ENCODE measurements at regions of chr12 and their contacts with region 1.

Region 1: GRCh38 chr12:46124848-46125619 is 134.7 kb upstream of the SCAF11 start:
- DNase-seq: peak; percentile 42
- CTCF ChIP-seq: peak; percentile 81

Region 2: GRCh38 chr12:45324391-45324790 is 800.6 kb before region 1 on chr12:
- CTCF ChIA-PET with region 1: no interaction called
- POLR2A ChIA-PET with region 1: no interaction called
- DNase-seq: no peak
- CTCF ChIP-seq: no peak

Region 3: DNA sequence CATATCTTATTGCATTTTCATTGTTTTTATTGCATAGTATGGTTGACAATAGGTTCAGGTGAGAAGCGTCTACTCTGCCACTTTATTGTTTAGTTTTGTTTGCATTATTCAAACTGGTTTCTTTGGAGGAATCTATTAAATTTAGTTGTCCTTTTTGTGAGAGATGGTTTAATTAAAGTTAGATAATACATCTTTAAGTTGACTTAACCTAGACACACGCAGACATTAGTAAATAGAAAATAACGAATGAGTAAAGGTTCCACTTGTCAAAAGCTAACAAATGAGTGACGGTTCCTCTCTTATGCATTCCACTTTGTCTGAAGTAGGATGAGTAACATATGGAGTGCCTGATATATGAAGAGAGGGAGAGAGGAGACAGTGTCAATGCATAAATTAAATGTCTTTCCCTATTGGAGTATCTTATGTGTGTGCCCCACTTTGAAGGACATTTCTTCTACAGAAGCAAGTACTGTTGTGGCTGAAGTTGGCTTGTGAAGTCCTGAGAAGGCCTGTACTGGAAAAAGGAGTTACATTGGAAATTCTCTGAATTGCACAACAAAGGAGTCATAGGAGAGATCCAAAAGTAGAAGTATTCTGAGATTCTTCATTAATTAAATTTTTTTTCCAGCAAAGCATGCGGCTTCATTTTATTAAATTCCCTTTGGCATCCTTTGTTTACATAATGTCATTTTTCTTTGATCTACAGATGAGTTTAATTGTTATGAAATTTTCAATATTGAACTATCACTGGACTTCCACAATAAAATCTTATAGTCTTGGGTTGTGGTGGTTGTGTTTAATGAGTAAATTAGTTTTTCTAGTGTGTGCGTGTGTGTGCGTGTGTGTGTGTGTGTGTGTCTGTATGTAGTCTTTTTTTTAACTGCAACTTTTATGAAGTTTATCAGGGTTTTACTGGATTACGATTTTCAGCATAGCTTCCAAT is 321.1 kb before region 1 on chr12:
- CTCF ChIA-PET with region 1: no interaction called
- POLR2A ChIA-PET with region 1: no interaction called
- DNase-seq: no peak
- CTCF ChIP-seq: no peak

Region 4: GRCh38 chr12:46100855-46101484 is 24.1 kb before region 1 on chr12:
- CTCF ChIA-PET with region 1: interaction called, 17 read pairs
- POLR2A ChIA-PET with region 1: no interaction called
- DNase-seq: no peak
- CTCF ChIP-seq: no peak

Region 5: DNA sequence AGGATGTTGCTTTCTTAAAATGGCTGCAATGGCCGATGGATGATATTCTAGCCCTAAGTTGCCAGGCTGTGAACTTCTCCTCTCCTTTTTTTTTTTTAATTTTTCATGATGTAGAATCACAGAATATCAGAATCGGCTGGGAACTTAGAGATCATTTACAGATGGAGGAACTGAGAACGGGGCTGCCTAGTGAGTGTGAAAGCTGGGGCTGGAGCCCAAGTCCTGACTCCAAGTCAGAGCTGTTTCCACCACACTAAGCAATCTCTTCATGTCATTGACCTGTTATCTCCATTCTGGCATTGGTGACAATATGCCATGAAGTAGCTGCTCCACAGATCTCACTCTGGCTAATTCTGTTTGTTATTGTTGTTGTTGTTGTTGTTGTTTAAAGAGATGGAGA is 22.1 kb after region 1 on chr12:
- CTCF ChIA-PET with region 1: interaction called, 30 read pairs
- POLR2A ChIA-PET with region 1: no interaction called
- DNase-seq: peak; percentile 21
- CTCF ChIP-seq: no peak

Region 6: GRCh38 chr12:46364777-46365580 is 239.9 kb after region 1 on chr12:
- CTCF ChIA-PET with region 1: interaction called, 11 read pairs
- POLR2A ChIA-PET with region 1: no interaction called
- DNase-seq: no peak
- CTCF ChIP-seq: no peak

Region 7: DNA sequence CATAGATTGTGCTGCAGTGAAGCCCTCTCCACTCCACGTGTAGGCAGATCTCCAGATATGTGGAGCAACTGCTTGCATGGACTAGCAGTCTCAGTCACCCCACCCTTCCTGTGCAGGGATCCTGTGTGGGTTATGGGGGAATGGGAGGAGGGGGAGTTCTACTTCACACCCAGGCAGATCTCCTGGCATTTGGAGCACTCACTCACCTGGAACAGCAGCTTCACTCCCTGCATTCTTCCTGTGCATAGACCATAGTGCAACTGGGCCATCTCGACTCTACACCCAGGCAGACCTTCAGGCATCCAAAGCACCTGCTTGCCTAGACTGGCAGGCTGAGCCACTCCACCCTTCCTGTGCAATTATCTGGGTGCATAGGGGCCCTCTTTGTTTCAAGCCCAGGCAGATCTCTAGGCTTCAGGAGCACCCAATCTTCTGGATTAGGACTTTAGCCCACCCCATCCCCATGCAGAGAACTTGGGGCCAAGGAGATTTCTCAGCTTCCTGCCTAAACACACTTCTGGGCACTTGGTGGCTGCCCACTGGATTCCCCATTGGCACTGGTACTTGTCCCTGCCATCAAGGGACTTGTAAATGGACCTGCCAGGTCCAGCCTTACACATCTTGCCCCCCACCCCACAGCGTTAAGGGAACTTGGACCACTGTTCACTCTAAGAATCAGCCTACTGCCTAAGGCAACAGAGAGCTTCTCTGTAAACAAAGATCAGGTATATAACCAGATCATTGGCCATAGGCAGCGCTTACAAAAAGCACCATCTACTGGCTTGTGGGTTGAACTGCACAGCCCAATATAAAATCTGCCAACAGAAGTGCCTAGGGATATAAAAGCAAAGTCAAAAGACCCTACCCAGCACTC is 858.6 kb after region 1 on chr12:
- CTCF ChIA-PET with region 1: interaction called, 17 read pairs
- POLR2A ChIA-PET with region 1: no interaction called
- DNase-seq: peak; percentile 39
- CTCF ChIP-seq: peak; percentile 74